Uterus (tissue), 4 donors: ENCODE measurements at regions of chr14 and their contacts with region 1.

Region 1: GRCh38 chr14:23327947-23328744 is 6.9 kb downstream of the PABPN1 start:
- DNase-seq: peak; percentile 66 to 83
- H3K4me3 ChIP-seq: no peak overlapping the region
- H3K27ac ChIP-seq: no peak overlapping the region
- H3K4me1 ChIP-seq: peaks cover under 1 to 8% of the 10 kb centered on the region in 2 donors
- H3K27me3 ChIP-seq: no peaks in the 10 kb centered on the region
- CTCF ChIP-seq: peak; percentile 81 to 86 (median 84)
- POLR2A ChIP-seq: no peak

Region 2: GRCh38 chr14:23379366-23380196 is 51.4 kb after region 1 on chr14:
- intact Hi-C with region 1: loop called (anchors 5 kb)
- DNase-seq: peak in 1 of 2 donors; percentile 54
- H3K4me3 ChIP-seq: no peak overlapping the region
- H3K27ac ChIP-seq: no peak overlapping the region
- H3K4me1 ChIP-seq: no peaks in the 10 kb centered on the region
- H3K27me3 ChIP-seq: no peaks in the 10 kb centered on the region
- CTCF ChIP-seq: peak; percentile 84 to 89 (median 86)
- POLR2A ChIP-seq: no peak